ENCODE measurements at regions of chr10 and their contacts with region 1.

Region 1: DNA sequence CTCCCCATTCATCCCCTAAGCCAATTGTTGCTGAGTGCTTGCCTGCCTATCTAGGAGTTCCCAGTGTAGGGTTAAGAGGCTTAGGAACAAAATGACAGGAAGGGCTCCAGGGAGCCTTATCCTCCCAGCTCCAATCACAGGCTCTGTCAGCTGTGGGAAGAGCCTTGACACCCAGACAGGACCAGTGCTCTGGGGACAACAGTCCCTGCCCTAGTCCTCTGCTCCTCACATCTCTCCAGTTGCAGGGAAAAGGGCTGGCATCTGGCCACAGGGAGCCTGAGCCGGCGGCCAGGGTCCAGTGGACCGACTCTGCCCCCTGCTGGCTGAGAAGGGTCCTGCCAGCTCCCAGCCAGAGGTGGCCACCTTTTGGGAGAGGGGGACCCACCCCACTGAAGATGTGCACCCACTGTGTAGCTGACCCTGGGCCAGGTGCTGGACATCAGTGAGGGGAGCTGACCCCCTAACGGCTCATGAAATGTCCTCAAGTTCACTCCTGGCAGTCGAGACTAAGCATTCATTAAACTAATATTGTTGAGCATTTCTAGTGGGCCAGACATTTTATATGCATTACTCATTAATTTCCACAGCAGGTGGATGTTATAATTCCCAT is 17.6 kb downstream of the DNAJB12 start:
- DNase-seq: peak; percentile 76 to 88 (median 81)
- ATAC-seq: peak; percentile 81
- H3K4me3 ChIP-seq: no peak overlapping the region
- H3K27ac ChIP-seq: no peak overlapping the region
- H3K4me1 ChIP-seq: peaks cover 2 to 36% of the 10 kb centered on the region in 2 experiments; a peak in 2 of 5 replicates
- H3K27me3 ChIP-seq: no peaks in the 10 kb centered on the region
- CTCF ChIP-seq: peak; percentile 91 to 99 (median 93)
- EP300 ChIP-seq: no peak
- POLR2A ChIP-seq: peak; percentile 29; the same call in 1 of the 2 replicates
- RAD21 ChIP-seq: peak; percentile 95 to 97

Region 2: GRCh38 chr10:72082856-72083789 is 254.0 kb before region 1 on chr10:
- CTCF ChIA-PET with region 1: no interaction called
- POLR2A ChIA-PET with region 1: no interaction called
- in situ Hi-C with region 1: no loop called
- intact Hi-C with region 1: no loop called
- DNase-seq: no peak
- ATAC-seq: no peak
- H3K4me3 ChIP-seq: no peak overlapping the region
- H3K27ac ChIP-seq: no peak overlapping the region
- H3K4me1 ChIP-seq: peaks cover 0 to 22% of the 10 kb centered on the region in 2 experiments; a peak in 2 of 5 replicates
- H3K27me3 ChIP-seq: no peaks in the 10 kb centered on the region
- CTCF ChIP-seq: no peak
- EP300 ChIP-seq: no peak
- POLR2A ChIP-seq: no peak
- RAD21 ChIP-seq: no peak

Region 3: GRCh38 chr10:72126184-72126871 is 210.8 kb before region 1 on chr10:
- CTCF ChIA-PET with region 1: interaction called, 10 read pairs
- POLR2A ChIA-PET with region 1: interaction called, 3 read pairs
- in situ Hi-C with region 1: loop called (anchors 10 kb)
- intact Hi-C with region 1: no loop called
- DNase-seq: peak; percentile 27 to 59 (median 46)
- ATAC-seq: peak; percentile 79
- H3K4me3 ChIP-seq: no peak overlapping the region
- H3K27ac ChIP-seq: no peak overlapping the region
- H3K4me1 ChIP-seq: peaks cover 0 to 5% of the 10 kb centered on the region in 2 experiments; a peak in 1 of 5 replicates
- H3K27me3 ChIP-seq: no peaks in the 10 kb centered on the region
- CTCF ChIP-seq: peak; percentile 47 to 82 (median 58); a peak in 5 of 6 replicates
- EP300 ChIP-seq: no peak
- POLR2A ChIP-seq: no peak
- RAD21 ChIP-seq: peak; percentile 77 to 89

Region 4: GRCh38 chr10:72354478-72355213 is 17.5 kb after region 1 on chr10 and contains the start of gene DNAJB12:
- CTCF ChIA-PET with region 1: interaction called, 3 read pairs
- POLR2A ChIA-PET with region 1: interaction called, 57 read pairs
- in situ Hi-C with region 1: no loop called
- intact Hi-C with region 1: no loop called
- DNase-seq: peak; percentile 97 to 98 (median 98)
- ATAC-seq: peak; percentile 89
- H3K4me3 ChIP-seq: peak within 1 kb of the TSS; percentile 94
- H3K27ac ChIP-seq: peak within 1 kb of the TSS; percentile 99
- H3K4me1 ChIP-seq: peaks cover 12 to 15% of the 10 kb centered on the region in 2 experiments
- H3K27me3 ChIP-seq: no peaks in the 10 kb centered on the region
- CTCF ChIP-seq: peak in 1 of 3 experiments; percentile 30; a peak in 2 of 6 replicates
- EP300 ChIP-seq: peak; percentile 62
- POLR2A ChIP-seq: peak; percentile 99
- RAD21 ChIP-seq: peak in 1 of 2 experiments; percentile 17; a peak in 1 of 4 replicates
- polyA plus RNA-seq, gene DNAJB12: 3.5 to 4.7 TPM